ENCODE measurements at regions of chr20 and their contacts with region 1.

Region 1: DNA sequence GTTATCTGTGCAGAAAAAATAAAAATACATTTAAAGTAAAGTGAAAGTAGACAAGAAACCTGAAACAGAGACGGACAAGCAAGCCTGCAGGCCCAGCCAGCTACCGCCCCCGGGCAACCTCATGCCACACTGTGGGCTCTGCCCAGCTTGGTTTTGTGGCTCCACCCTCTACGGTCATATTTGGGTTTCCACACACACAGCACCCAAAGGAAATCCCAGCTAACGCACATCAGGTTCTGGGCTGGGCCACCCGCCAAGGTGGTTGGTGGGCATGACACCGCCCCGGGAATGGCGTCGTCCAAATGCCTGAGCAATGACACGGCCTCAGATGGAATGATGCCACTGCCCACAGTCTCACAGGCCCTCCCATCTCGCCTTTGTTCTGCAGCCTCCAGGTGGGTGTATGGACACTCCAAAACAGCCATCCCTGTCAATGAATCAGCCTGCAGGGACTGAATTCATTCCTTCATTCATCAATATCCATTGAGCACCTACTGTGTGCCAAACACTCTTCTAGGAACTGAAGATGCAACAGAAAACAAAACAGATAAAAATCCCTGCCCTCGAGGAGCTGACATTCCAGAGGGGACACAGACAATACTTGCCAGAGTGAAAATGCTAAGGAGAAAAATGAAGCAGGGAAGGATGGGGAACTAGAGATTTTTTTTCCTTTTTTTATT is 23.0 kb downstream of the FAM110A start:
- DNase-seq: peak; percentile 100
- H3K4me3 ChIP-seq: peak overlapping the region; percentile 10 to 29 (median 15)
- H3K27ac ChIP-seq: peak overlapping the region; percentile 75
- H3K4me1 ChIP-seq: peaks cover 74% of the 10 kb centered on the region
- H3K27me3 ChIP-seq: no peaks in the 10 kb centered on the region
- CTCF ChIP-seq: no peak

Region 2: DNA sequence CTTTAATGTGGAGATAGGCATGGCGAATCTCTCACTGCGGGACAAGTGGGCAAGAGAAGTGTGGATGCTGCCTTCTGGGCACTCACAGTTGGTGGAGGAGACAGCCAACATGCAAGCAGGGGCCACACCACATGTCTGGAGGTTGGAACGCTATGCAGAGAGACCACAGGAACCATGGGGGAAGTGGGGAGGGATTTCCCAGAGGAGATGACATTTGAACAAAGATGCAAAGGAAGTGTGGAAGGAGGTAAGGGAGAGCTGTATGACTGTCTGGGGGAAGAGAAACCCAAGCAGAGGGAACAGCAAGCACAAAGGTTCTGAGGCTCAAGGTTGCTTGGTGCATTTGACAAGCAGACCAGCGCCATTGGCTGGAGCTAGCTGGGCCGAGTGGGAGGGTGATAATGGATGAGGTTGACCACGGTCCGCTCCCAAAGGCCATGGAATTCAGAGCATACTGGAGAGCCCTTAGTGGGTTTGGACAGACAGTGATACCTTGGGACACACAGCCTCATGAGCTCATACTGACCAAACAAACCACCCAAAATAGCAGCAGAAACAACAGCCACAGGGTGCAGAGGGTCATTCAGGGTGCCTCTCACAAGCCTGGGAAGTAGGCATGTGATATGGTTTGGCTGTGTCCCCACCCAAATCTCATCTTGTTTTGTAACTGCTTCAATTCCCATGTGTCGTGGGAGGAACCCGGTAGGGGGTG is 30.6 kb before region 1 on chr20:
- CTCF ChIA-PET with region 1: no interaction called
- dilution Hi-C with region 1: no loop called
- in situ Hi-C with region 1: no loop called
- intact Hi-C with region 1: loop called (anchors 5 kb)
- DNase-seq: no peak
- H3K4me3 ChIP-seq: no peak overlapping the region
- H3K27ac ChIP-seq: no peak overlapping the region
- H3K4me1 ChIP-seq: no peaks in the 10 kb centered on the region
- H3K27me3 ChIP-seq: no peaks in the 10 kb centered on the region
- CTCF ChIP-seq: no peak

Region 3: DNA sequence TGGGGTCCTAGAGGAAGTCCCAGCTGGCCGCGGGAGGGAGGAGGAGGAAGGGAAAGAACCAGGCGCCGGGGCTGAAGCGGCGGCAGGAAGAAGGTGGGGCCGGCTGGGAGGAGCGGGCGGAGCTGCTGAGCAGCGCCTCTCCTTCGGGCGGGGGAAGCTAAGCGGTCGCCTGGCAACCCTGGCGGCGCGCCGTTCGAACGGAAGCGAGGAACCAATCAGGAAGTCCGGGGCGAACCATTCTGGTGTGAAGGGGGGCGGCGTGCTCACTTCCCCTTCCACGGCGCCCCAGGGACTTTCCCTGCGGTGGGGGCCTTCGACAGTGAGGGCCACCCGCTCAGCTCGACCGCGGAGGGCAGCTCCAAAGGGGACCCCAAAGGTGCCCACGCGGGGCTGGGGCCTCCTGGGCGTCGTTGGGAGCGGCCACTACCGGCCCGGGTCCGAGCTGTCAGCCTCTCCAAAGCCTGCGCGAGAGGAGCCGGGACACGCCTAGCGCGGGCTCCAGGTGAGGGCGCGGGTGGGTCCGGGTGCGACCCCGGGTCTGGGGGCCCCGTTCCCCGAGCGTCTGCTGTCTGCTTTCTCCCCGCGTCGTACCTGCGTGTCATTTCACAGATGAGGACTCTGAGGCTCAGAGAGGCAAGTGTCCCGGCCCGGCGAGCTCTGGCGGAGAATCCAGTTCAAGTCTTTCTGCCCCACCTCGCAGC is 22.9 kb before region 1 on chr20 and contains the start of gene FAM110A:
- CTCF ChIA-PET with region 1: no interaction called
- dilution Hi-C with region 1: no loop called
- in situ Hi-C with region 1: no loop called
- intact Hi-C with region 1: loop called (anchors 1 kb)
- DNase-seq: peak; percentile 95
- H3K4me3 ChIP-seq: peak within 1 kb of the TSS; percentile 85 to 93 (median 88)
- H3K27ac ChIP-seq: peak within 1 kb of the TSS; percentile 79
- H3K4me1 ChIP-seq: peaks cover 26% of the 10 kb centered on the region
- H3K27me3 ChIP-seq: no peaks in the 10 kb centered on the region
- CTCF ChIP-seq: no peak
- total RNA-seq, gene FAM110A: 6.5 to 23.0 TPM

Region 4: GRCh38 chr20:844473-845225 is 11.9 kb before region 1 on chr20:
- CTCF ChIA-PET with region 1: no interaction called
- dilution Hi-C with region 1: no loop called
- in situ Hi-C with region 1: no loop called
- intact Hi-C with region 1: loop called (anchors 1 kb)
- DNase-seq: peak; percentile 91
- H3K4me3 ChIP-seq: peak overlapping the region; percentile 14 to 32 (median 19)
- H3K27ac ChIP-seq: peak overlapping the region; percentile 38
- H3K4me1 ChIP-seq: peaks cover 39% of the 10 kb centered on the region
- H3K27me3 ChIP-seq: no peaks in the 10 kb centered on the region
- CTCF ChIP-seq: no peak

Region 5: GRCh38 chr20:884983-885952 is 28.8 kb after region 1 on chr20:
- CTCF ChIA-PET with region 1: no interaction called
- dilution Hi-C with region 1: no loop called
- in situ Hi-C with region 1: no loop called
- intact Hi-C with region 1: loop called (anchors 1 kb)
- DNase-seq: peak; percentile 16
- H3K4me3 ChIP-seq: no peak overlapping the region
- H3K27ac ChIP-seq: no peak overlapping the region
- H3K4me1 ChIP-seq: peaks cover 17% of the 10 kb centered on the region
- H3K27me3 ChIP-seq: no peaks in the 10 kb centered on the region
- CTCF ChIP-seq: peak in 1 of 2 donors; percentile 23

Measured in mammary epithelial cell (primary cell).